Activated naive CD4-positive, alpha-beta T cell treated with anti-CD3 and anti-CD28 coated beads for 36 hours (primary cell): ENCODE measurements at regions of chr7 and their contacts with region 1.

Region 1: DNA sequence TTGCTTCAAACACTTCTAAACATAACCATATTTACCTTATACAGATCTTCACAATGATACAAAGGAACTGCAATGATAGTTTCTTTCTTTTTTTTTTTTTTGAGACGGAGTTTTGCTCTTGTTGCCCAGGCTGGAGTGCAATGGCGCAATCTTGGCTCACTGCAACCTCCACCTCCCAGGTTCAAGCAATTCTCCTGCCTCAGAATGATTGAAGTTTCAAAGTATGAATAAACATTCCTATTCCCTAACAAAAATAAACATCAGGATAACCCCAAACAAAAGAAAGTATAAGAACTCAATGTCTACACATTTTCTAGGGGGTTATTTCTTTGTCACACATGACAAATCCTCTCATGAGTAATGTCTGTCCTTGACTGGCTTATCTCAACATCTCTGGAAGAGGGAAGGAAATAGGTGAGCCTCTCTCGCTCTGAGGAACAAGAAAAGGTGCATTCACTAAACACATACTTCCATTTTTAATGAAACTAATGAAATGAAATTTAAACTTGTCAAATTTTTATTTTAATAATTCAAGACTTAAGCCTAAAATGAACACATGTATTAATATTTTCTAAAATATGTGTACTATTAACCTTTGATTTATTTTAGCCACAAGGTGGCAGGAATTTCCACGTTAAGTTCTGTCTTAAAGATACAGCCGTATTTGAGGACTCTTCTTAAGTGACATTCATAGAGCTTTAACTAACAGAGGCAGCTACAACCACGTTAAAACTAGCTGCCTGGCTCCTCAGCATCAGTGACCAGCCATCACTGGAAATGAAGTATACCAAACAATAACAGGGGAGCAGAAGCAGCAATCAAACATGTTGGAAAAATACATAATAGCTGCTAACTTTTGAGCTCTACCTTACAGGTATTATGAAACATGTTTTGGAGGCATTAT is 58.3 kb downstream of the MALSU1 start:
- DNase-seq: no peak
- H3K4me3 Mint-ChIP-seq: no peak overlapping the region
- H3K27ac Mint-ChIP-seq: no peak overlapping the region
- H3K4me1 Mint-ChIP-seq: peaks cover 15% of the 10 kb centered on the region
- H3K27me3 Mint-ChIP-seq: peaks cover 3% of the 10 kb centered on the region

Region 2: DNA sequence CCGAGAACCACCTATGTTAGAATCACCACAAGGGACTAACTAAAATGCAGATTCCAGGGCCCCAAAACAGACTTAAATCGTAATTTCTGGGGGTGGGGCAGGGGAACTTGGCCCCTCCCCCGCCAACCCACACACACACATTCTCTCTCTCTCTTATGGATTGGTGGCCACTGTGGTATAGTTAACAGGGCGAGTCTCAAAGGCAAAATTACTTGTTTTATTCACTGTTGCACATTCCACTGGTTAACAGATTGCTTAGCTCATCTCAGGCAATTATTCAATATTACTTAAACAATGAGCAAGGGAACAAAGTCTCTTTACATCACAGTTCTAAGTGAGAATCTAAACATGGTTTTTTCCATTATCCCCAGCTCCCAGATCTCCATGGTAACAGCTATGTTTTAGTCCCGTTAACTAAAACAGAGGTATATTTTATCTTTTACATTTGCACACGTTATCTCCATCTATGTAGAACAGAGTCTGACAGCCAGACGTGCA is 74.3 kb after region 1 on chr7:
- CTCF ChIA-PET with region 1: interaction called, 22 read pairs
- intact Hi-C with region 1: loop called (anchors 1 kb)
- DNase-seq: no peak
- H3K4me3 Mint-ChIP-seq: no peak overlapping the region
- H3K27ac Mint-ChIP-seq: no peak overlapping the region
- H3K4me1 Mint-ChIP-seq: peaks cover 4% of the 10 kb centered on the region
- H3K27me3 Mint-ChIP-seq: peaks cover 23% of the 10 kb centered on the region

Region 3: DNA sequence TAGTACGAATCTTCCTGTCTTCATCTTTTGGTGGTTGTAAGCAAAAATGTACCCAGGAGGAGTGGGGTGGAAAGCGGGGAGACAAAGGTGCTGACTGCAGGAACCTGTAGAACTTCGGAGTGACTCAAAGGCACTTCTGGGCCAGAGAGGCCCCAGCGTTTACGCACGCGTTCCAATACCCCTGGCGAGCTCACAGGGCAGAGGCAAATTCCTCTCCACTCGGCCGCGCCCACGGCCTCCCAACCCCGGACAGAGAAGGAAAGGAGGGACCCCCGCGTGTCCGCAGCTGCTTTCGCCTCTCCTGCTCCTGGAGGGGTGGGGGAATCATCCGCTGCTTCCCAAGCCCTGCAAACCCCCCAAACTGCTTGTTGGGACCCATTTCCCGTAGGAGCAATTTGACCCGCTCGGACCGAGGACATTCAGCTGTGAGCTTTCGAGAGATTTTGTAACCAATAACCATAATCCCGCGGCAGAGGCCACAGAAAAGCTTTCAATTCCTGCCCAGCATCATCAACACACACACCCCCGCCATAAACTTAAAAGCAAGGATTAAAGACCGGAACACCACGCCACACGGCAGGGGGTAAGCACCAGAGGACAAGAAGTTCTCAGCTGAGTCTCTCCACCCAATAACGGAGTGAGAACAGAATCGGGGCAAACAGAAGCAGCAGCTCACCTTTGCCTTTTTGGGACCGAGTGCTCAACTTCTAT is 110.5 kb after region 1 on chr7:
- CTCF ChIA-PET with region 1: interaction called, 50 read pairs
- intact Hi-C with region 1: loop called (anchors 1 kb)
- DNase-seq: peak; percentile 45
- H3K4me3 Mint-ChIP-seq: peak overlapping the region; percentile 63
- H3K27ac Mint-ChIP-seq: no peak overlapping the region
- H3K4me1 Mint-ChIP-seq: peaks cover 26% of the 10 kb centered on the region
- H3K27me3 Mint-ChIP-seq: peaks cover 68% of the 10 kb centered on the region

Region 4: DNA sequence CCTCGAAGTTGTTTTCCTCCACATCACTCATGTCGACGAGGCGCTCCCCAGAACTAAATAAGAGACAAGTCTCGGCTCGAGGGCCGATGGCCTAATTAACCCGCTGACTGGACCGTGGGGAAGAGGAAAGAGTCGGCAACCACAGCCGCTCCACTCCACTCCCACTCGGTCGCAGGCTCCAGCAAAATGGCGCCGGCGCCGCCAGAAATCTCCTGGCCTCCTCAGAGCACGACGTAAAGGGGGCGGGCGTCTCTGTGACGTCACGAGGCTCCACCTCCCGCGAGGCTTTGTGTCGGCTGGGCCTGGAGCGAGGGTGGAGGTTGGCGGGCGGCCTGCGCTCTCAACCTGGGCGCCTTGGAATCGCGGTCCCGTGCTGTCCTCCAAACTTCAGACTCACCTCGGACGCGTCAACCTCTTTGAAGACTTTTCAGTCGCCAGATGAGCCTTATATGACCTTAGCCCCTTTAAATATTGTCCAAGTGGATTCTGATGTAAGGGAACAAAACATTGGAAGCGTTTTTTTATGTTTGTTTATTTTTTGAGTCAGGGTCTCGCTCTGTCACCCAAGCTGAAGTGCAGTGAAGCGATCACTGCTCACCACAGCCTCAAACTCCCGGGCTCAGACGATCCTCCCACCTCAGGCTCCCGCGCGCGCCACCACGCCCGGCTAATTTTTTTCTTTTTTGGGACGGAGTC is 174.5 kb after region 1 on chr7 and contains the start of gene TRA2A:
- CTCF ChIA-PET with region 1: interaction called, 7 read pairs
- intact Hi-C with region 1: loop called (anchors 5 kb)
- DNase-seq: peak; percentile 99
- H3K4me3 Mint-ChIP-seq: peak within 1 kb of the TSS; percentile 99
- H3K27ac Mint-ChIP-seq: peak within 1 kb of the TSS; percentile 100
- H3K4me1 Mint-ChIP-seq: peaks cover 43% of the 10 kb centered on the region
- H3K27me3 Mint-ChIP-seq: no peaks in the 10 kb centered on the region
- total RNA-seq, gene TRA2A: 77.8 to 79.0 TPM

Region 5: DNA sequence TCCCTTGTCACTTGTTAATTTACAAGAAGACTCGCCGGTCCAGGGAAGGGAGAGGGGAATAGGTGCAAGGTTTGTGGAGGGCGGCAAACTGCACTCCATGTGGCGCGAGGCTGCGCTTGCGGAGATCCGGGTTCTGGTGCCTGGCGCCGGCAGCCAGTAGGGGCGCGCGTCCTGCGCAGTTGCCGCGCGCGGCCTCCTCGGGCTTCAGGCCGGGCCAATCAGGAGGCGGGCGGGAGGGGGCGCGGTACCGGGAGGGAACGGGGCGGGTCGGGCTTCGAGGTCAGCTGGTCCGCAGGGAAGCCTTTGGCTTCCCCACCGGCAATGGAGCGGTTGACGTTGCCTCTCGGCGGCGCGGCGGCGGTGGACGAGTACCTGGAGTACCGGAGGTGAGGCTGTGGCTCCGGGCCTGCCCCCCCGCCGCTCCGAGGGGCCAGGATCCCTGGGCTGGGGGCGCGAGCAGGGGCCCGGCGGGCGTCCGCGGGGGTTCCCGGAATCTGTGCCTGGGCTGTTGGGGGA is 322.5 kb after region 1 on chr7 and contains the start of gene FAM221A:
- CTCF ChIA-PET with region 1: no interaction called
- intact Hi-C with region 1: no loop called
- DNase-seq: peak; percentile 86
- H3K4me3 Mint-ChIP-seq: peak within 1 kb of the TSS; percentile 80
- H3K27ac Mint-ChIP-seq: peak within 1 kb of the TSS; percentile 66
- H3K4me1 Mint-ChIP-seq: peaks cover 11% of the 10 kb centered on the region
- H3K27me3 Mint-ChIP-seq: peaks cover 5% of the 10 kb centered on the region
- total RNA-seq, gene FAM221A: 8.7 to 10.0 TPM

Region 6: DNA sequence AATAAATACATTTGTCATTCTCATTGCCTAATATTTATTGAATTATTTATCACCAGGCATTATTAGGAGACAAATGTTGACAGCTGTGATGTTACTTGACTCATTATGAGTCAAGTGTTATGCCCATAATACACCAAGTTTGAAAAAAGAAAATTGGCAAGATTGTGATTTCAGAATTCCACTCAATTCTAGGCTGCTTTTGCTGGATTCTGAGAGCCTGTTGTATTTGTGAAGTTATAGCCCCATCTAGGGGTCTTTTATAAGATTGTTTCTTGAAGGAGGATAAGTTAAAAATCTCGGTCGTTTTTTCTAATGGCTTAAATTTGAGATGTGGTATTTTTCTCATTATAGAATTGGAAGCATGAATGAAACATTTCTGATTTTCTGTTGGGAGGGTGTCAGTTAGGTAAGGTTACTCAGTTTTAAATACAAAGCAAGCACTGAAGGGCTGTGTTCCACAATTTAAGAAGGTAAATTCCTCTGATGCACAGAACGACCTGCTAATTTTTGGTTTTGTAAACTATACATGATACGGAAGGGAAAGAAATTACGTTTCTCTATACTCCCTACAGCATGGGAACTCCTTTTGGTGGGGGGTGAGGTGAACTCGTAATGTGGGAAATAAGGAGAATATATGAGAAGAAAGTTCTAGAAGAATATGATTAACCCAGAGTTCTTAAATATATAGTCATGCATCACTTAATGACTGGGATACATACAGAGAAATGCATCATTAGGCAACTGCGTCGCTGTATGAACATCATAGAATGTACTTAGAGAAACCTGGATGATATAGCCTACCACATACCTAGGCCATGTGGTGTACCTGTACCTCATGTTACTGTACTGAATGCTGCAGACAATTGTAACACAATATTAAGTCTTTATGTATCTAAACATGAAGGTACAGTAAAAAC is 355.2 kb after region 1 on chr7:
- CTCF ChIA-PET with region 1: interaction called, 4 read pairs
- intact Hi-C with region 1: loop called (anchors 1 kb)
- DNase-seq: no peak
- H3K4me3 Mint-ChIP-seq: no peak overlapping the region
- H3K27ac Mint-ChIP-seq: no peak overlapping the region
- H3K4me1 Mint-ChIP-seq: no peaks in the 10 kb centered on the region
- H3K27me3 Mint-ChIP-seq: peaks cover 2% of the 10 kb centered on the region